ENCODE measurements at regions of chr18 and their contacts with region 1.

Region 1: DNA sequence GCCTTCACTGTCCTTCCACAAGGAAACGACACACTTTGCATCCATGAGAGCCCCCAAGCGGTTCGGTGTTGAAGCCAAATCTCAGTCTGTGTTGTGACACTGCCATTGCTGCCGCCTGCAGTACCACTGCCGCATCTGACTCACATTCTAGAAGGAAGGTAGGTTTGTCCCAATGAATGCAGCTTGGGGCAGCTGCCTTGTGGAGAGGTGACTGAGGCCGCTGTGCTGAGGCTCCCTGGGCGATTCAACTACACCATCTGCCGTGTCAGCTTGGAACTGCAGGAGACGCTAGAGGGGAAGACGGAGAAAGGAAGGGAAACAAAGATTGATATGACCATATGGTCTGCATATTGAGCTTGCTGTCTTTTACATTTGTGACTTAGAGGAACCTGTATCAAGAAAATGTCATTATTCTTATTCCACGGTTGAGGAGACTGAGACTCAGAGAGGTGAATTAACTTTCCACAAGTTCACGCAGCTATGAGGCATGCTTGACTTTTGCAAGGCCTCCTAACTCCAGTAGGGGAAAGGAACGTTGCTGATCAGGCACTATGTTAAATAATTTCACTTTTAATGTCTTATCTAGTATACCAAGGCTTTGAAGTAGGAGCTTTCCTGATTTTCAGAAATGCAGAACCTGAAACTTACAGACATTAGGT is 43.5 kb upstream of the LMAN1 start:
- DNase-seq: peak; percentile 4
- H3K4me3 ChIP-seq: no peak overlapping the region
- H3K27me3 ChIP-seq: no peaks in the 10 kb centered on the region
- CTCF ChIP-seq: peak; percentile 99

Region 2: GRCh38 chr18:58590839-58591238 is 811.7 kb before region 1 on chr18:
- CTCF ChIA-PET with region 1: no interaction called
- POLR2A ChIA-PET with region 1: no interaction called
- DNase-seq: no peak
- H3K4me3 ChIP-seq: no peak overlapping the region
- H3K27me3 ChIP-seq: no peaks in the 10 kb centered on the region
- CTCF ChIP-seq: no peak

Region 3: DNA sequence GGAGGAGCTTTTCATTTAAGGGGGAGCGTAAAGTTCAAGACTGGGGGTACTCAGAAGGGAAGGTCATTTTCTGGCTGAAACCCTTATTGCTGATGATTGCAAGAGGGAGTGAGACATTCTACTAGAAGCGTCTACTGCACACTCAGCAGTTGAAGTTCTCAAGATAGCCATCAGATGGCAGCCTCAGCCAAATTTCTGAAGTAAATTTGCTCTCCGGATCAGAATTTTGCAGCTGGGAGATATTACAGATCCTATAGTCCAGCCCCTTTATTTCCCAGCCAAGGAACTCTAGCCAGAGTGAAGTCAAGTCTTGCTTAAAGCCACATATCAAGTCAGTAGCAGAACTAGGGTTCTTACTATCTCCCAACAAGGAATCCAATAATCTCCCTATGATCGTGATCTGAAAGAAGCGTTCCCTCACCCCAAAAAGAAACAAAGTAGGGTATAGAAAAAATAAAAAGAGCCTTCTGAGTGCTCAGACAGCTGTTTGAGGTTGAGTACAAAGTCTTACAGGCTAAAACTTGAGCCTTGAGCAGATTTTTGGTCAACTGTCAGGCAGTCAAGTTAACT is 153.3 kb before region 1 on chr18:
- CTCF ChIA-PET with region 1: interaction called, 100 read pairs
- POLR2A ChIA-PET with region 1: no interaction called
- DNase-seq: peak; percentile 47
- H3K4me3 ChIP-seq: no peak overlapping the region
- H3K27me3 ChIP-seq: peaks cover 5% of the 10 kb centered on the region; the same call in 1 of the 2 replicates
- CTCF ChIP-seq: peak; percentile 83

Region 4: GRCh38 chr18:59308248-59308937 is 94.2 kb before region 1 on chr18:
- CTCF ChIA-PET with region 1: interaction called, 110 read pairs
- POLR2A ChIA-PET with region 1: no interaction called
- DNase-seq: no peak
- H3K4me3 ChIP-seq: peak overlapping the region; percentile 34
- H3K27me3 ChIP-seq: peaks cover 26% of the 10 kb centered on the region
- CTCF ChIP-seq: peak; percentile 77

Region 5: GRCh38 chr18:59387687-59388565 is 14.6 kb before region 1 on chr18:
- CTCF ChIA-PET with region 1: interaction called, 19 read pairs
- POLR2A ChIA-PET with region 1: no interaction called
- DNase-seq: no peak
- H3K4me3 ChIP-seq: no peak overlapping the region
- H3K27me3 ChIP-seq: no peaks in the 10 kb centered on the region
- CTCF ChIP-seq: no peak